Mucosa of descending colon (tissue), 3 donors: ENCODE measurements at regions of chr14 and their contacts with region 1.

Region 1: GRCh38 chr14:99884834-99885648 is 91.8 kb downstream of the EML1 start:
- DNase-seq: peak in 1 of 3 donors; percentile 36
- ATAC-seq: peak; percentile 64
- H3K4me3 ChIP-seq: no peak overlapping the region
- H3K4me1 ChIP-seq: peaks cover 5% of the 10 kb centered on the region
- CTCF ChIP-seq: peak; percentile 37

Region 2: GRCh38 chr14:99729991-99730868 is 154.8 kb before region 1 on chr14:
- intact Hi-C with region 1: loop called (anchors 5 kb)
- DNase-seq: peak in 2 of 3 donors; percentile 81 to 85
- ATAC-seq: peak; percentile 74
- H3K4me3 ChIP-seq: no peak overlapping the region
- H3K4me1 ChIP-seq: no peaks in the 10 kb centered on the region
- CTCF ChIP-seq: peak; percentile 86